ENCODE measurements at regions of chr16 and their contacts with region 1.

Region 1: DNA sequence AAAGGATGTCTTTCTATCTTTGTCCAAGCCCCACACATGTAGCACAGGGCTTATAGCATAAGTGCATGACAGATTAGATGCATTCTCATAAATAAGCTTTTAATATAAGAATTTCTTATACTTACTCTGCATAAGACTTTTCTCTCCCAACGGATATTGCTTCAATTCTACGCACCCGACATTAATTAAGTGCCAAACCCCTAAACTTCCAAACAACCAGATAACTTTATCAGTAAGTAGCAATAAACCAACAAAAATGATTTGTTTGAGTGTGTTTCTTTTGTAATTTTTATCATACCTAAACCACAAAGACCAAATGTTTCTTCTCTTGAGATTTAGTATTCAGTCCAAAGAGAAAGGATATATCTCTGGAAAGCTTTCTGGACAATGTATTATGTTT is 391.5 kb downstream of the CDH8 start:
- DNase-seq: no peak
- H3K4me3 ChIP-seq: no peak overlapping the region
- CTCF ChIP-seq: no peak

Region 2: DNA sequence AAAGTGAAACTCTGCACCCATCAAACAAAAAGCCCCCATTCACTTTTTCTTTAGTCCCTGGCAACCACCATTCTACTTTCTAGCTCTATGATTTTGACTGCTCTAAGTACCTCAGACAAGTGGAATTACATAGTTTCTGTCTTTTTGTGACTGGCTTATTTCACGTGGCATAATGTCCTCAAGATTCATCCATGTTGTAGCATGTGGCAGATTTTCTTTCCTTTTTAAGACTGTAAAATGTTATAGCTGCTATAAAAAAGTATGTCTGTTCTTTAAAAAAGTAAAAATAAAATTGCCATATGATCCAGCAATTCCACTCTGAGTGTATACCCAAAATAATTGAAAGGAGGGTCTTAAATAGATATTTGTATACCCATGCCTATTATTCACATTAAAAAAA is 38.2 kb before region 1 on chr16:
- in situ Hi-C with region 1: no loop called
- DNase-seq: no peak
- H3K4me3 ChIP-seq: no peak overlapping the region
- CTCF ChIP-seq: no peak

Region 3: GRCh38 chr16:61713787-61714186 is 69.1 kb after region 1 on chr16:
- in situ Hi-C with region 1: loop called (anchors 5 kb)
- DNase-seq: no peak
- H3K4me3 ChIP-seq: no peak overlapping the region
- CTCF ChIP-seq: no peak

Region 4: DNA sequence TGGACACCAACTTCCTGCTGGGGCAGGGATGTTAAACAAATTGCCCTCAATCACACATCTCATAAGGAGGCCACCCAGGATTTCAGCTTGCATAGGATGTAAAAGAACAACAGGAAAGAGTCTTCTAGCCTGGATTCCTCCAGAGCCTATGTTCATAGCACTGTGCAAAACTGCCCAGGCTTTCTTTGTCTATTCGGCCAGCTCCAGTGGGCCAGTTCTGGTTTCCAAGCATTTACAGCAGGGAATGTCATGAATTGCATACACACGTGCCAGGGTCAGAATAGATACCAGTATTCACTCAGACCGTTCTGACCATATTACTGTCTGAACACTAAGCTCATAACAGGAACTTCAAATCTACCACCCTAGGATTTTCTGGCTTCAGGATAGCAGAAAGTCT is 118.3 kb after region 1 on chr16:
- in situ Hi-C with region 1: no loop called
- DNase-seq: no peak
- H3K4me3 ChIP-seq: no peak overlapping the region
- CTCF ChIP-seq: no peak